CD8-positive, alpha-beta memory T cell (primary cell): ENCODE measurements at regions of chr10 and their contacts with region 1.

Region 1: DNA sequence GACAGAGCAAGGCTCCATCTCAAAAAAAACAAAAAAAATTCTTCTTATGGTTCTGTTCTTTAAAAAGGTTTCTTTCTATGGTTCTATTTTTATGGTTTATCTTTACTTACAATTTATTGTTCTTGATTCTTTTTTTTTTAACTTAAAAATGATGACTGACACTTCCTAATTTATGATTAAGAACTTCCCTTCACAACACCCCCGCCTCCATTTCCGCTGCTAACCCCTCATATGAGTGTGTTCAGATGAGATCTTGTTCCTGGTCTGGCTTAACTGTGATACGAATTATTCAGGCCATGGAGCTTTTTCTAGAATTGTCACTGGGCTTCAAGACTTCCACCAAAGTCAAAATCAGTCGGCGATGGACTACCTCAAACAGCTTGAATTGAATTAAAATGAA is 33.9 kb downstream of the PTER start:
- DNase-seq: peak in 1 of 5 donors; percentile 11
- H3K4me3 ChIP-seq: no peak overlapping the region
- H3K4me3 Mint-ChIP-seq: peak overlapping the region in 3 of 7 donors; percentile 39 to 51 (median 48)
- H3K27ac ChIP-seq: no peak overlapping the region
- H3K27ac Mint-ChIP-seq: peak overlapping the region in 7 of 8 donors; percentile 4 to 79 (median 36)
- H3K4me1 ChIP-seq: no peaks in the 10 kb centered on the region
- H3K4me1 Mint-ChIP-seq: peaks cover 25 to 40% (median 33%) of the 10 kb centered on the region in 3 donors
- H3K27me3 ChIP-seq: no peaks in the 10 kb centered on the region
- H3K27me3 Mint-ChIP-seq: peaks cover 0 to 2% of the 10 kb centered on the region in 2 donors

Region 2: GRCh38 chr10:16458166-16458955 is 12.4 kb before region 1 on chr10:
- CTCF ChIA-PET with region 1: no interaction called
- POLR2A ChIA-PET with region 1: no interaction called
- DNase-seq: no peak
- H3K4me3 ChIP-seq: no peak overlapping the region
- H3K4me3 Mint-ChIP-seq: no peak overlapping the region
- H3K27ac ChIP-seq: no peak overlapping the region
- H3K27ac Mint-ChIP-seq: peak overlapping the region in 1 of 8 donors; percentile 3
- H3K4me1 ChIP-seq: no peaks in the 10 kb centered on the region
- H3K4me1 Mint-ChIP-seq: peaks cover 23 to 34% (median 29%) of the 10 kb centered on the region in 3 donors
- H3K27me3 ChIP-seq: no peaks in the 10 kb centered on the region
- H3K27me3 Mint-ChIP-seq: no peaks in the 10 kb centered on the region

Region 3: GRCh38 chr10:16481052-16481728 is 10.4 kb after region 1 on chr10:
- CTCF ChIA-PET with region 1: no interaction called
- POLR2A ChIA-PET with region 1: interaction called, 14 read pairs
- DNase-seq: no peak
- H3K4me3 ChIP-seq: no peak overlapping the region
- H3K4me3 Mint-ChIP-seq: no peak overlapping the region
- H3K27ac ChIP-seq: no peak overlapping the region
- H3K27ac Mint-ChIP-seq: no peak overlapping the region
- H3K4me1 ChIP-seq: no peaks in the 10 kb centered on the region
- H3K4me1 Mint-ChIP-seq: peaks cover 1 to 18% (median 13%) of the 10 kb centered on the region in 3 donors
- H3K27me3 ChIP-seq: no peaks in the 10 kb centered on the region
- H3K27me3 Mint-ChIP-seq: no peaks in the 10 kb centered on the region

Region 4: GRCh38 chr10:16505161-16505560 is 34.4 kb after region 1 on chr10:
- CTCF ChIA-PET with region 1: no interaction called
- POLR2A ChIA-PET with region 1: no interaction called
- DNase-seq: no peak
- H3K4me3 ChIP-seq: no peak overlapping the region
- H3K4me3 Mint-ChIP-seq: no peak overlapping the region
- H3K27ac ChIP-seq: no peak overlapping the region
- H3K27ac Mint-ChIP-seq: no peak overlapping the region
- H3K4me1 ChIP-seq: no peaks in the 10 kb centered on the region
- H3K4me1 Mint-ChIP-seq: no peaks in the 10 kb centered on the region
- H3K27me3 ChIP-seq: no peaks in the 10 kb centered on the region
- H3K27me3 Mint-ChIP-seq: no peaks in the 10 kb centered on the region